WTC11 (cell line): ENCODE measurements at regions of chr16 and their contacts with region 1.

Region 1: DNA sequence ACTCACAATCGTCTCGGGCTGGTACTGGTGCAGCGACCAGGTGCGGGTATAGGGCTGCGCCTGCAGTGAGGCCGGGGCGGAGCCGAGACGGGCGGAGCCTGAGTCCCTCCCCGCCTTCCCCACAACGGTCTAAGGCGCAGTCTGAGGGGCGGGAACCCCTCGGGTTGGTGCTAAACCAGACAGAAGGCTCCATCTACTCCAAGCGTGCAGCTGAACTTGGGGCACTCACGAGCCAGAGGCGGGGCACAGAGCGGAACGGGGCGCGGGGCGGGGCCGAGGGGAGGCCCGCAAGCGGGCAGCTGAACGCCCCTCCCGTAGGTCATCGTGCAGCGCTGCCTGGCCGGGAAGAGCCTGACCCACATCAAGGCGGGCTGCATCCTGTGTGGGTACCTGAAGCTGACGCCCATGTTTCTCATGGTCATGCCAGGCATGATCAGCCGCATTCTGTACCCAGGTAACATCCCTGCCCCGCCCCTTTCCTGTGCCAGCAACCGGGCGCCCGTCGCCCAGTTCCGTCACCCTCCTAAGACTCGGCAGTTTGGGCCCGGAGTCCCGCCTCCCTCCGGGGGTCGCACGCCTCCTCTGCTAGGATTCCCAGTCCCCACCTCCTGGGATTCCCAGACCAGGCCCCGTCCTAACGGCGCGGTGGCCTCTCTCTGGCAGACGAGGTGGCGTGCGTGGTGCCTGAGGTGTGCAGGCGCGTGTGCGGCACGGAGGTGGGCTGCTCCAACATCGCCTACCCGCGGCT is 5.0 kb downstream of the SLC5A2 start:
- DNase-seq: peak; percentile 78
- ATAC-seq: peak; percentile 89
- H3K4me3 Mint-ChIP-seq: peak overlapping the region; percentile 78
- H3K27ac Mint-ChIP-seq: no peak overlapping the region
- H3K4me1 Mint-ChIP-seq: peaks cover 8% of the 10 kb centered on the region
- H3K27me3 Mint-ChIP-seq: peaks cover 73% of the 10 kb centered on the region
- CTCF ChIP-seq: no peak

Region 2: GRCh38 chr16:31472709-31473203 is 15.1 kb before region 1 on chr16:
- CTCF ChIA-PET with region 1: interaction called, 26 read pairs
- POLR2A ChIA-PET with region 1: interaction called, 8 read pairs
- DNase-seq: peak; percentile 93
- ATAC-seq: peak; percentile 58
- H3K4me3 Mint-ChIP-seq: peak overlapping the region; percentile 82
- H3K27ac Mint-ChIP-seq: no peak overlapping the region
- H3K4me1 Mint-ChIP-seq: peaks cover 11% of the 10 kb centered on the region
- H3K27me3 Mint-ChIP-seq: peaks cover 65% of the 10 kb centered on the region
- CTCF ChIP-seq: peak; percentile 90

Region 3: GRCh38 chr16:31502981-31503380 is 15.1 kb after region 1 on chr16:
- CTCF ChIA-PET with region 1: interaction called, 12 read pairs
- POLR2A ChIA-PET with region 1: interaction called, 3 read pairs
- DNase-seq: no peak
- ATAC-seq: no peak
- H3K4me3 Mint-ChIP-seq: no peak overlapping the region
- H3K27ac Mint-ChIP-seq: peak overlapping the region; percentile 41; the same call in 1 of the 2 replicates
- H3K4me1 Mint-ChIP-seq: peaks cover 29% of the 10 kb centered on the region
- H3K27me3 Mint-ChIP-seq: no peaks in the 10 kb centered on the region
- CTCF ChIP-seq: no peak

Region 4: GRCh38 chr16:31528523-31529397 is 40.9 kb after region 1 on chr16:
- CTCF ChIA-PET with region 1: interaction called, 11 read pairs
- POLR2A ChIA-PET with region 1: interaction called, 5 read pairs
- DNase-seq: peak; percentile 34
- ATAC-seq: peak; percentile 52
- H3K4me3 Mint-ChIP-seq: peak overlapping the region; percentile 81
- H3K27ac Mint-ChIP-seq: no peak overlapping the region
- H3K4me1 Mint-ChIP-seq: peaks cover 30% of the 10 kb centered on the region
- H3K27me3 Mint-ChIP-seq: peaks cover 13% of the 10 kb centered on the region
- CTCF ChIP-seq: no peak

Region 5: GRCh38 chr16:31713071-31713944 is 225.4 kb after region 1 on chr16:
- CTCF ChIA-PET with region 1: interaction called, 10 read pairs
- POLR2A ChIA-PET with region 1: interaction called, 7 read pairs
- DNase-seq: peak; percentile 95
- ATAC-seq: peak; percentile 93
- H3K4me3 Mint-ChIP-seq: peak overlapping the region; percentile 98
- H3K27ac Mint-ChIP-seq: peak overlapping the region; percentile 99
- H3K4me1 Mint-ChIP-seq: peaks cover 32% of the 10 kb centered on the region
- H3K27me3 Mint-ChIP-seq: no peaks in the 10 kb centered on the region
- CTCF ChIP-seq: no peak